Activated CD4-positive, alpha-beta memory T cell treated with anti-CD3 and anti-CD28 coated beads, Interleukin-2, amount 10 ng/mL, durations not matched to agents 7 days and 5 days (primary cell): ENCODE measurements at regions of chr11 and their contacts with region 1.

Region 1: GRCh38 chr11:122796128-122796717 is 42.1 kb upstream of the CRTAM start:
- DNase-seq: peak; percentile 58
- H3K4me3 Mint-ChIP-seq: no peak overlapping the region
- H3K27ac Mint-ChIP-seq: no peak overlapping the region
- H3K4me1 Mint-ChIP-seq: no peaks in the 10 kb centered on the region
- H3K27me3 Mint-ChIP-seq: no peaks in the 10 kb centered on the region

Region 2: GRCh38 chr11:122578168-122578825 is 217.9 kb before region 1 on chr11:
- CTCF ChIA-PET with region 1: interaction called, 13 read pairs
- POLR2A ChIA-PET with region 1: no interaction called
- DNase-seq: no peak
- H3K4me3 Mint-ChIP-seq: no peak overlapping the region
- H3K27ac Mint-ChIP-seq: no peak overlapping the region
- H3K4me1 Mint-ChIP-seq: peaks cover 5% of the 10 kb centered on the region
- H3K27me3 Mint-ChIP-seq: peaks cover 16% of the 10 kb centered on the region

Region 3: DNA sequence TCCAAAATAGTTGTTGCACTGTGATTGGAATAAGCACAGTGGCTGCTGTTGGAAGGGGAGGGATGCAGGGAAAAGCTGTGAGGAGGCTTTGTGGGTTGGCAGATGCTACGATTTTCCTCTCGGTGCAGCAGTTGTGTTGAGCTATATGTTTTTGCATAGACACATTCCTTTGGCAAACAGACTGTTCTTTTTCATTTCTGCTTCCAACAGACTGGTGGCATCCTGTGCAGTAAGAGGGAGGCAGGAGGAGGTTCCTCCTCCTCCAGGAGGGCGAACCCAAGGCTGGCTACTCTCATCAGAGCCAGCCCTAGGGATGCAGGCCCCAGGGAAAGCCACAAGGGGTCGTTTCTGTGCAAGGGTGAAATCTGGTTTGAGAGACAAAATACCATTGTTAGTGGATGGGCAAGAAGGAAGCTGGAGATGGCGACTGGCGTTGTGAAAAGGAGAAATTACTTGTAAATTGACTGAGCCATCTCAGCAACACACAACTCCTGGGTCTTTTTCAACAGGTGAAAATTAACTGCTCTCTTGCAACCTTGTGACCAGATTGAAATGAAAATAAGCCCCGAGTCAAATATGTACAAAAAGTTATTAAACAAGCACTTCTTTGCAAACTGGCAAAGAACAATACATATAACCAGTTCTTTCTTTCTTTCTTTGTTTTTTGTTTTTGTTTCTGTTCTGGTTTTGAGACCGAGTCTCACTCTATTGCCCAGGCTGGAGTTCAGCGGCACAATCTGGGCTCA is 167.2 kb before region 1 on chr11:
- CTCF ChIA-PET with region 1: interaction called, 11 read pairs
- POLR2A ChIA-PET with region 1: no interaction called
- DNase-seq: peak; percentile 67
- H3K4me3 Mint-ChIP-seq: no peak overlapping the region
- H3K27ac Mint-ChIP-seq: no peak overlapping the region
- H3K4me1 Mint-ChIP-seq: peaks cover 5% of the 10 kb centered on the region
- H3K27me3 Mint-ChIP-seq: peaks cover 9% of the 10 kb centered on the region

Region 4: GRCh38 chr11:122743949-122744348 is 52.3 kb before region 1 on chr11:
- CTCF ChIA-PET with region 1: no interaction called
- POLR2A ChIA-PET with region 1: no interaction called
- DNase-seq: peak; percentile 82
- H3K4me3 Mint-ChIP-seq: no peak overlapping the region
- H3K27ac Mint-ChIP-seq: no peak overlapping the region
- H3K4me1 Mint-ChIP-seq: peaks cover 1% of the 10 kb centered on the region
- H3K27me3 Mint-ChIP-seq: peaks cover 3% of the 10 kb centered on the region

Region 5: DNA sequence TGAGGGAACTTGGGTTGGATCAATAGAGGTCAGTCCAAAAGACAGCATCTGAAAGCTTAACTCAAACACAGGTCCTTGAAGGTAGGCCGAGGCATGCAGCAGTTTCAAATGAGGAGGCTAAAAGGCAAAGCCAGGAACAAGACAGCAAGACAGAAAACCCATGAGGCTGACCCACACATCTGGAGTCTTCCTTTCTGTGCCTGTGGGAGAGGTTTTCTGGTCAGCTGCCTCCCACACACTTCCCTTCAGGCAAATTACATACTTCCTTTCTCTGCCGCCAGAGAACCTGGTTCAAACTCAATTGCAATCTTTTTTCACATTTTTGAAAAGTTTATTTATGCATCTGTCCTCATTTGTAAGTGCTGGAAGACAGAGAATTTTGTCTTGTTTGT is 12.3 kb after region 1 on chr11:
- CTCF ChIA-PET with region 1: interaction called, 27 read pairs
- POLR2A ChIA-PET with region 1: no interaction called
- DNase-seq: no peak
- H3K4me3 Mint-ChIP-seq: no peak overlapping the region
- H3K27ac Mint-ChIP-seq: no peak overlapping the region
- H3K4me1 Mint-ChIP-seq: peaks cover 13% of the 10 kb centered on the region
- H3K27me3 Mint-ChIP-seq: no peaks in the 10 kb centered on the region

Region 6: DNA sequence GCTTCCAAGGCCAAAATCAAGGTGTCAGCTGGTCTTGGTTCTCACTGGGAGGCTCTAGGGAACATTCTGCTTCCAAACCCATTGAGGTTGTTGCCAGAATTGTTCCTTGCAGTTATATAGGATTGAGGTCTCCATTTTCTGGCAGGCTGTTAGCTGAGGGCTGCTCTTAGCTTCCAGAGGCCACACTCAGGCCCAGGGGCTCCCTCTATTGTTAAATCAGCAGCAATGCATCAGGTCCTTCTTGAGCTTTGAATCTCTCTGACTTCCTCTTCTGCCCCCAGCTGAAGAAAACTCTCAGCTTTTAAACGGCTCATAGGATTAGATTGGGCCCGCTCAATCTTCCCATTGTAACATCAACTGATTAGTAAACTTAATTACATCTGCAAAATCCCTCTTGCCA is 224.7 kb after region 1 on chr11:
- CTCF ChIA-PET with region 1: interaction called, 13 read pairs
- POLR2A ChIA-PET with region 1: no interaction called
- DNase-seq: peak; percentile 38
- H3K4me3 Mint-ChIP-seq: no peak overlapping the region
- H3K27ac Mint-ChIP-seq: no peak overlapping the region
- H3K4me1 Mint-ChIP-seq: peaks cover 6% of the 10 kb centered on the region
- H3K27me3 Mint-ChIP-seq: peaks cover 18% of the 10 kb centered on the region